Ovary (tissue), 10 donors: ENCODE measurements at regions of chr2 and their contacts with region 1.

Region 1: DNA sequence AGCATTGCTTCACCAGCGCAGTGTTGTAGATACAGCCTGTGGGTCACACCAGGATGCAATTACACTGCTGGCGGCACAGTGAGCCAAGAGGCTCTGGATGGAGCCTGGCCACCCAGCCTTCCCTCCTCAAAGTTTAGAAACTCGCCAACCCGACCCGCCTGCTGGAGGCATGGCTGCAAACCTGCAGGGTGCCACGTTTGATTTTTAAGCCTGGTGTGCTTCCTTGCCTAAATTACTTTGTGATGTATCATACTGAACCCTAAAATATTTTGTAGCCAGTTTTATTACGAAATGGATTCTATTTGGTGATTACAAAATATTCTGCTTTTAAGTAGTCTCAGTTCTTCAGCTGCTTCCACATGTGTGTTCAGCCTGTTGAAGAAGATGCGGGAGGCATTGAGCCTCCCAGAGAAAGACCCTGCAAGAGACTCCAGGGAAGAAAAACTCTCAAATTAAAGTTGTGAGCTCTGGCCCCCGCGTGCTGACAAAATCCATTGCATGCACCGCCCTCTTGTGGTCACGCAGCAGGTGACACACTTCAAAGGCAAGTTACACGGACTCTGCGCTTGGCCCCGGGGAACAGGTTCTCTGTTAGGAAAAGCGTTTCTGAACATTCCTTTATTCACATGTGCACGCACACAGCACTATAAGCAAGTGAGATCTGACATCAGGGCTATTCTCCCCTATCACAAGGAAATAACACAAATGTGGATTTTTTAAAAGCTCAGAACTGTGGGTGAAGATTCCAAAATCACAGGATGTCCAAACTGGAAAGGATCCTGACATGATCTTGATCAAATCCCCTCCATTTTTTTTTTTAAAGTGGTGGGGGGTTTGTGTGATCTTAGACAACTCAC is 63.0 kb upstream of the TWIST2 start:
- DNase-seq: peak; percentile 71 to 85 (median 80)
- H3K4me3 ChIP-seq: no peak overlapping the region
- H3K27ac ChIP-seq: no peak overlapping the region
- H3K4me1 ChIP-seq: no peaks in the 10 kb centered on the region
- H3K27me3 ChIP-seq: no peaks in the 10 kb centered on the region
- CTCF ChIP-seq: peak; percentile 71 to 88 (median 79)
- EP300 ChIP-seq: no peak
- POLR2A ChIP-seq: no peak

Region 2: GRCh38 chr2:238352361-238352760 is 432.5 kb before region 1 on chr2:
- intact Hi-C with region 1: loop called in 2 of 4 experiments (anchors 10 kb)
- DNase-seq: no peak
- H3K4me3 ChIP-seq: no peak overlapping the region
- H3K27ac ChIP-seq: no peak overlapping the region
- H3K4me1 ChIP-seq: no peaks in the 10 kb centered on the region
- H3K27me3 ChIP-seq: no peaks in the 10 kb centered on the region
- CTCF ChIP-seq: no peak
- EP300 ChIP-seq: no peak
- POLR2A ChIP-seq: no peak

Region 3: GRCh38 chr2:238370823-238371372 is 414.0 kb before region 1 on chr2:
- intact Hi-C with region 1: loop called in 2 of 4 experiments (anchors 5 to 10 kb)
- DNase-seq: peak; percentile 52 to 67 (median 63)
- H3K4me3 ChIP-seq: no peak overlapping the region
- H3K27ac ChIP-seq: no peak overlapping the region
- H3K4me1 ChIP-seq: peaks cover 3% of the 10 kb centered on the region
- H3K27me3 ChIP-seq: no peaks in the 10 kb centered on the region
- CTCF ChIP-seq: peak in 2 of 3 donors; percentile 43 to 66
- EP300 ChIP-seq: no peak
- POLR2A ChIP-seq: no peak

Region 4: DNA sequence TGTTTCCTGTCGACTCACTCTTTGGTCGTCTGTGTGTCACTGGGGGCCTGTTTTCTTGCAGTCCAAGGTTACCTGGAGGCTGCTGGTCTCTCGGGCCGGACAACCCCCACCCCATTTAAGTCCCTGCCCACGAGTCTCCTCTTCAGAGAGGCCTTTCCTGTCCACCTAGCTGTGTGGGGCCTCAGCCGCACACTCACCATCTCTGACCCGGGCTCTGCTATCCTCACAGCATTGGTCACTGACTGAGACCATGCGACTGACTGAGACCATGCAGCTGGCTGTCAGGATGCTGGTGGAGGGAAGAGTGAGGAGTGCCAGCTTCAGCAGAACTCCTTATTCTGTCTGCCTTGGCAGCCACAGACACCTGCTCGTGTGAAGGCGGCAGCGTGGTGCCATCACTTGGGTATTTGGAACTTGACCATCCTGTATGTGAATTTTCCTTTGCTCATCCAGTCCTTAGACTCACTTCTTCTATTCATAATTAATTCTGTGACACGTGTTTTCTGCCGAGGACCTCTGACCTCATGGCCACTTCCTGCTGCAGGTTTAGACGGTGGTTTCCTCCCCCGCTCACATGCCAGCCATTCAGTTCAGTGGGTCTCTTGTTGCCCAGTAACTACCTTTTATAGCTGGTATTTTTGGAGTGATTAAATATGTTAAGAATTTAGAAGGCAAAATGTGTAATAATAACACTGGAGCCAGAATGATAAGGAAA is 405.6 kb before region 1 on chr2:
- intact Hi-C with region 1: loop called in 2 of 4 experiments (anchors 5 to 10 kb)
- DNase-seq: no peak
- H3K4me3 ChIP-seq: no peak overlapping the region
- H3K27ac ChIP-seq: no peak overlapping the region
- H3K4me1 ChIP-seq: peaks cover 1% of the 10 kb centered on the region
- H3K27me3 ChIP-seq: no peaks in the 10 kb centered on the region
- CTCF ChIP-seq: no peak
- EP300 ChIP-seq: no peak
- POLR2A ChIP-seq: no peak